B cell (primary cell): ENCODE measurements at regions of chr6 and their contacts with region 1.

Region 1: DNA sequence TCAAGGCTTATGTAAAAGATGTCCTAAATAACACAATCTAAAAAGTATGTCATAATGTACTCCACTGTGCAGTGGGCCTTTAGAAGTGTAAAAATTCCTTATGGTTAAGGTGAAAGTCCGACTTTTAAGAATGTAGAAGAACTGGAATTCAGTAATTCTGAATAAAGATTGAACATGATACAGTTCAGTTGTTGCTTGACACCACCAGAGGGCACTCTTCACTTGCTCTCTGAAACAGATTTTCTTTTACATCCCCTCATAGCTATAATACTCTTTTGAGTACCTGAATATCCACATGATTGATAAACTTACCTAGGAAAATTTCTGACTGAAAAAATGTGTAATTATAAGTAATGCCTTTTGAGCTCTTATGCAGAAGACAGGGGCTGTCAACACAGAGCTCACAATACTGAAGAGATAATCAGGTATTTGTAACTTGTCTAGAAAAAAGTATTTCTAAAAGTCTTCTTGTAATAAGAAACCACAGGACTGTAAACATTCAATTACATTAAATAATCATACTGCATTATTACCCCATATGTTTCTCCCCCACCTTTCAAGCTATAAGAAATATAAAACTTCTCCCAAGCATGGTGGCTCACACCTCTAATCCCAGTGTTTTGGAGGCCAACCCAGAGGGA is 92.1 kb downstream of the POPDC3 start:
- DNase-seq: peak; percentile 56
- ATAC-seq: no peak
- H3K4me3 ChIP-seq: no peak overlapping the region
- H3K4me3 Mint-ChIP-seq: no peak overlapping the region
- H3K27ac ChIP-seq: no peak overlapping the region
- H3K27ac Mint-ChIP-seq: no peak overlapping the region
- H3K4me1 ChIP-seq: no peaks in the 10 kb centered on the region
- H3K4me1 Mint-ChIP-seq: no peaks in the 10 kb centered on the region
- H3K27me3 ChIP-seq: no peaks in the 10 kb centered on the region
- H3K27me3 Mint-ChIP-seq: peaks cover 15% of the 10 kb centered on the region
- CTCF ChIP-seq: peak; percentile 87

Region 2: GRCh38 chr6:104548297-104548696 is 539.4 kb before region 1 on chr6:
- CTCF ChIA-PET with region 1: no interaction called
- POLR2A ChIA-PET with region 1: no interaction called
- intact Hi-C with region 1: no loop called
- DNase-seq: no peak
- ATAC-seq: no peak
- H3K4me3 ChIP-seq: no peak overlapping the region
- H3K4me3 Mint-ChIP-seq: no peak overlapping the region
- H3K27ac ChIP-seq: no peak overlapping the region
- H3K27ac Mint-ChIP-seq: no peak overlapping the region
- H3K4me1 ChIP-seq: no peaks in the 10 kb centered on the region
- H3K4me1 Mint-ChIP-seq: no peaks in the 10 kb centered on the region
- H3K27me3 ChIP-seq: no peaks in the 10 kb centered on the region
- H3K27me3 Mint-ChIP-seq: peaks cover 3% of the 10 kb centered on the region
- CTCF ChIP-seq: no peak

Region 3: DNA sequence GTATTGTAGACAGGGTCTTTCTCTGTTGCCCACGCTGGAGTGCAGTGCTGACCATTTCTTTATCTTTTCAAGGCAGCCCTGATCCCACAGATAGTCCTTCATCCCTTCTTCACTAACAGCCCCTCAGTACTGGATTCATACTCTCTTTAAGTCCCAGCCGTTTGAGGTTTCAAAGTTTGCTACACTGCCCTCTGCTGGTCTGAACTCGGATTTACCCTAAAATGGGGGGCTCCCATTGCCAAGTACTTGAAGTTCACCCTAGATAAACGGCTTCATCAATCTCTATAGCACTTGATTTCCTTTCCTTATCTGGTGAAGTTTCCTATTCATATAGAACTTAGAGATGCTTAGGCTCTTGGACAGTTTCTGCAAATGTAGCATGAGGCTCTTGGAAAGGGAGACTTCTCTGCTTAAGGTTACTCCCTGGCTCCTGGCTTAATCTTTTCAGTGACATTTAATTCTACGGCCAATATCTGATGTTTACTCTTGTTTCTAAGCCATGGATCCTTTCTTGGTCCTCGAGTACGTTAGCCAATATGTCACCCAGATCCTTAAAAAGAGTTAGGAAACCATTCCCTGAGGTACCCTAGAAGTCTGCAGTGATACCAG is 336.6 kb after region 1 on chr6:
- CTCF ChIA-PET with region 1: interaction called, 36 read pairs
- POLR2A ChIA-PET with region 1: no interaction called
- intact Hi-C with region 1: no loop called
- DNase-seq: peak; percentile 72
- ATAC-seq: peak; percentile 70
- H3K4me3 ChIP-seq: no peak overlapping the region
- H3K4me3 Mint-ChIP-seq: no peak overlapping the region
- H3K27ac ChIP-seq: no peak overlapping the region
- H3K27ac Mint-ChIP-seq: no peak overlapping the region
- H3K4me1 ChIP-seq: no peaks in the 10 kb centered on the region
- H3K4me1 Mint-ChIP-seq: no peaks in the 10 kb centered on the region
- H3K27me3 ChIP-seq: no peaks in the 10 kb centered on the region
- H3K27me3 Mint-ChIP-seq: peaks cover under 1% of the 10 kb centered on the region
- CTCF ChIP-seq: peak; percentile 86